Head of caudate nucleus (tissue), 42 donors: ENCODE measurements at regions of chr1 and their contacts with region 1.

Region 1: GRCh38 chr1:152459596-152460528 is 45.8 kb upstream of the CRNN start:
- DNase-seq: peak; percentile 25 to 89 (median 72)

Region 2: GRCh38 chr1:152189657-152190442 is 270.0 kb before region 1 on chr1:
- intact Hi-C with region 1: loop called (anchors 2 kb)
- DNase-seq: peak; percentile 30 to 82 (median 62)

Region 3: GRCh38 chr1:152515434-152515783 is 55.5 kb after region 1 on chr1:
- intact Hi-C with region 1: no loop called
- DNase-seq: peak in 33 of 42 donors; percentile 5 to 65 (median 28)